ENCODE measurements at regions of chr2 and their contacts with region 1.

Region 1: GRCh38 chr2:148989882-148990493 is 48.5 kb upstream of the LYPD6B start:
- DNase-seq: no peak
- H3K4me3 ChIP-seq: no peak overlapping the region
- H3K27ac ChIP-seq: no peak overlapping the region
- H3K4me1 ChIP-seq: no peaks in the 10 kb centered on the region
- H3K27me3 ChIP-seq: no peaks in the 10 kb centered on the region
- CTCF ChIP-seq: peak; percentile 33 to 68 (median 52)

Region 2: DNA sequence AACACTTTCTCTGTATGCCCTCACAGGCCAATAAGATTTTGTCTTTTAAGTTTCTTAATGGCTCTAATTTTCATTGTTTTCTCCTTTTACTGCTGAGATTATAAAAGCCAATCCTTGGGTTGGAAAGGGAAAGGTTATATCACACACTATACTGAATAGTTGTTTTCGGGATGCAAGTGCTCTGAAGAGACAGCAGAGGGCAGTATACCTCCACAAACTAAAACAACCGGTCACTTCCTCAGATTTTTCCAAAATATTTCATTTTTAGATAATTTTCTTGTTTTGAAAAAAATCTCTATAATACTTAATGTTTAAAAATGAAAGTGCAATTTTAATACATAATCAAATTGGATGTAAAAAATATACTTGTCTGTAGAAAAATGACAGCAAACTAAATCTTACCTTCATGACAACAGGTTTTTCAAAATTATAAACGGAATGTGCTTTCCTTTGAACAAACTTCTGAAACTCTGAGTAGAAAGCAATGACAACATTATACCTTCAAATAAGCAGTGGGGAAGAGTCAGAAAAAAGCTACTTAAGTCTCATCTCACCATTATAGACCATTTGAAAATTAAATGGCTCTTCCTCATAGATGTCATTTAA is 1052.1 kb before region 1 on chr2:
- intact Hi-C with region 1: loop called (anchors 2 kb)
- DNase-seq: no peak
- H3K4me3 ChIP-seq: no peak overlapping the region
- H3K27ac ChIP-seq: no peak overlapping the region
- H3K4me1 ChIP-seq: no peaks in the 10 kb centered on the region
- H3K27me3 ChIP-seq: no peaks in the 10 kb centered on the region
- CTCF ChIP-seq: peak; percentile 46 to 86 (median 80)

Region 3: DNA sequence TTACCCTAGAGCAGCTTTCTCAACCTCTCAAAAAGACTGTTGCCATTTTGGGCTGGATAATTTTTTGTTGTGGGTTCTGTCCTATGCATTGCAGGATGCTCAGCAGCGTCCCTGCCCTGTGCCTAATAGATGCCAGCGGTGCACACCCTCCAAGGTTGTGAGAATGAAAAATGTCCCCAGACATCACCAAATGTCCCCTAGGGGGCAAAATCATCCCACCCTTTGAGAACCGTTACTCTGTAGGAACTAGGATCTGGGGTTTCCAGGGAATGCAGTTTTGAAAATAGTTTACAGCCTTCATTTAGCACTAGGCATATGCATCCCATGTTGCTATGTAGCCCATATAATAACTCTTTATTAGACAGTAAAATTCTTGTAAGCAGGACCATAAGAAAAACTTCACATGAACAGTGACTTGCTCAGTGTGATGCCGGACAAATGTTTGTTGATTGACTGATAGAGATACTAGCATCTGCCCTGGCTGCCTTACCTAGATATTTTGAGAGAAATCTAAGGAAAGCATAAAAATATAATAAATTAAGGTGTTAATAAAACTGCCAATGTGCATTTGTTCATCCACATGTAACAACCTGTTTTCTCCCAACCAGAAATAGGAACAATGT is 424.6 kb before region 1 on chr2:
- intact Hi-C with region 1: loop called (anchors 10 kb)
- DNase-seq: no peak
- H3K4me3 ChIP-seq: no peak overlapping the region
- H3K27ac ChIP-seq: no peak overlapping the region
- H3K4me1 ChIP-seq: no peaks in the 10 kb centered on the region
- H3K27me3 ChIP-seq: no peaks in the 10 kb centered on the region
- CTCF ChIP-seq: peak in 2 of 3 experiments; percentile 22 to 45

Region 4: DNA sequence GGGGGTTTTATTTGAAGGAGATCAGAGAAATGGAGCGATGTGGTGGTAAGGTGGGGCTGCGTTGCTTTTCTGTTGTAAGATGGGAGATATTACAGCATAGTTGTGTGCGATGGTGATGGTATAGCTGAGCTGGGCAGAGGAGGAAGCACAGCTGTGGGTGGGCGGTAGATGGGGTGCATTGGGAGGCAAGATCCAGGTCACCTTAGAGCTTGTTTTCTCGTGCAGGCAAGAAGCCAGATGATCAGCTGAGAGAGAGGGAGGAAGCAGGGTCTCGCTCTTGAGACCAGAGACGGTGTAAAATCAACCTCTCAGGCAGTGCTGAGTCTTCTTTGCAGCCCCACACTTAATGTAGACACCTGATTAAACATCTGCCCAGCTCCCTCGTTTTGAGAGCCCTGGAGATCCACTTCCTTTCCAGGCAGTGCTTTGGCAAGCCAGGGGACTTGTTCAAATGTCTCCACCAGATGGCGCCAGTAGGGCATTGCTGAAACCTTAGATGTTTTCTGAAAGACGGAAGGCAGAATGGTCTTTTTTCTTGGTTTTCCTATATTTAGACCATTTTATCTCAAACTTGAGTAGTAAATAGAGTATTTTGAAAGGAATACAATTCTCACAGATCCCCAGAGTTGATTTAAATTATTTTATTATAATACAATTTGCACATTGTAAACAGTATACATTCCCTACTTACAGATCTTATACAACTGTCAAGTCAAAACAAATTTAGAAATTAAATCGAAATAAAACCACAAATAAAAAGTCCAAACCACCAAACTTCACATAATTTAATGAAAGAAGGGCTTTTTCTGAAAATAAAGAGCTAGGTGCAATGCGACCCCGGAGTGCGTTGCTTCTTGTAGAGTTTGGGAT is 27.4 kb after region 1 on chr2:
- intact Hi-C with region 1: no loop called
- DNase-seq: peak in 1 of 2 donors; percentile 82
- H3K4me3 ChIP-seq: no peak overlapping the region
- H3K27ac ChIP-seq: no peak overlapping the region
- H3K4me1 ChIP-seq: peaks cover 0 to 5% of the 10 kb centered on the region in 2 donors
- H3K27me3 ChIP-seq: no peaks in the 10 kb centered on the region
- CTCF ChIP-seq: peak; percentile 54 to 88 (median 65)

Region 5: DNA sequence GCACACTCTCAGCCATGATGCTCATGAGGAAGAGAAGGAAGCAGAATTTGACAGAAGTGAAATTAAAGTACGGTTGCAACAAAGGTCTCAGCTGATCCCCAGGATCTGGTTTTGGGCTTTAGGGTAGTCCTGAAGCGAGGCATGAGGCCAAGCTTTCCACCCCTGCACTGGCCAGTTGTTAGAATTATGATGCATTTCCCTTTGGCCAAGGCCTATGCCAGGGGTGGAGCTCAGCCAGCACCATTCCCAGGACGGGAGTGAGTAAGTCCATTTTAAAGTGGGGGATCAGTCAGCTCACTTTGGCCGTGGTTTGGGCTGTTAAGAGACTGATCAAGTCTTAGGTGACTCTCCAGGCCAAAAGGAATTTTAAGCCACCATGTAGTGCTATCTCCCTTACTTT is 912.1 kb after region 1 on chr2:
- intact Hi-C with region 1: no loop called
- DNase-seq: peak; percentile 12 to 70
- H3K4me3 ChIP-seq: no peak overlapping the region
- H3K27ac ChIP-seq: no peak overlapping the region
- H3K4me1 ChIP-seq: no peaks in the 10 kb centered on the region
- H3K27me3 ChIP-seq: no peaks in the 10 kb centered on the region
- CTCF ChIP-seq: no peak

Measured in ascending aorta (tissue), 2 donors.